Activated CD4-positive, alpha-beta memory T cell treated with anti-CD3 and anti-CD28 coated beads for 36 hours (primary cell): ENCODE measurements at regions of chr19 and their contacts with region 1.

Region 1: DNA sequence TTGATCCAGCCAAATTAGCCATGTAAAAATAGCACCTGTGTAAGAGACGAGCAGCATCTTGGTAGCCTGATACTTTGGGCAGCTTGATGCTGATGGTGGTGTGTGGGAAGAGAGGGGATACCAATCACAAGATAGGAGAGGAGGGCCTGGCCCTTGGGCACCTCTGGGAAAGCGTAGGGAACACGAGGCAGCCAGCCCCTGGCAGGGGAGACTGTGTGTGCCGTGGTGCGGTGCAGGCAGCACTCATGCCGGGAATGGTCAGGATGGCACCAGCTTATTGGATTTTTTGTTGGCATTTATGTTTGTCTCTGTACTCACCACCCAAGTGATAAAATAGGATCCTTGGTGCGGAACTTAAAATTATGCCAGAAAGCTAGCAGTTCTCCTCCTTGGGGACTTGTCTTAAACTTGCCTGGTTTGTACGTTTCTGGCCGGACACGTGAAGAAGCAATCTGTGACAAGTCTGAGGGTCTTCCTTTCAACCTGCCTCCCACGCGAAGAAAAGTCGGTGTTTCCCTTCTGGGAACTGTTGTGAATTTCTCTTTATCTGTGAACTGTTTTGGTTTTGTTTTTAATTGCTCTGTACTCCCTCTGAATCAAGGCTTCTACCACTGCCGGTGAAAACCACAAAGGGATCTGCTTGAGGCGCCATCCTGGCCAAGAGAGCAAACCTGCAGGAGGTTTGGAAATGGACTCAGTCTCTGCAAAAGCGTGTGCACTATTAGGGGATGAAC is 10.1 kb downstream of the SIGLEC8 start:
- DNase-seq: peak; percentile 80
- H3K4me3 Mint-ChIP-seq: peak overlapping the region; percentile 51
- H3K27ac Mint-ChIP-seq: peak overlapping the region; percentile 93
- H3K4me1 Mint-ChIP-seq: peaks cover 51% of the 10 kb centered on the region
- H3K27me3 Mint-ChIP-seq: no peaks in the 10 kb centered on the region

Region 2: DNA sequence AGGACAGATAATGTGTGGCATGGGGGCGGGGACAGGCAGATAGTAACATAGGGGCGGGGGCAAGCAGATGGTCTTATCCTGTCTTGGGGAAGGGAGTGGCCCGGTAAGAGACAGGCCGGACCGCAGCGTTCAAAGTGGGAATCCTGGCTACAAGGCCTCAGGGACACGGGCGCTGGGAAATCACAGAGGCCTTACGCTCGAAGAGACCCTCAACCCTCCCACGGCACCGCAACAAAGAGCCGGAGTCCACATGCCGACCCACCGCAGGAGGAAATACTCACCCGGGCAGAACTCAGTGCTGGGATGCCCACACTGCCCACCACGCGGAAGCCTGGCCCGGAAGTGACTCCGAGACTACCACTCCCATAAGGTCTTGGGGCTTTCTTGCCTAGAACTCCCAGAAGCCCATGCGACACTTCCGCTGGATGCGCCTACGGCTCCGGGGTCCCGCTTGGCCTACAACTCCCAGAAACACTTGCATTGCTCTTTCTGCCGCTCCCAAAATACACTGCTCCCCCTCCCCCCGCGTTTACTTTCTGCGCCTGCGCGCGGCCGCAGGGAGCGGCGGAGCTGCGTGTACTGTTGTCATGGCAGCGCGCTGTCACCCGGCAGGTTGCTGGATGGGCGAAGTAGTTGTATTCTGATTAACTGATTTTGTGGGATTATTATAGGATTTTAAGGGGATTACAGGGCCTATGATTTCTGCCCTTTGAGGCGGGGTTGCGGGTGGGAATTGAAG is 339.9 kb before region 1 on chr19 and contains the start of gene CTU1:
- CTCF ChIA-PET with region 1: no interaction called
- POLR2A ChIA-PET with region 1: no interaction called
- intact Hi-C with region 1: loop called (anchors 5 kb)
- DNase-seq: peak; percentile 99
- H3K4me3 Mint-ChIP-seq: peak within 1 kb of the TSS; percentile 93
- H3K27ac Mint-ChIP-seq: peak within 1 kb of the TSS; percentile 81
- H3K4me1 Mint-ChIP-seq: peaks cover 35% of the 10 kb centered on the region
- H3K27me3 Mint-ChIP-seq: no peaks in the 10 kb centered on the region
- total RNA-seq, gene CTU1: 8.8 to 9.8 TPM